Mammary epithelial cell (primary cell): ENCODE measurements at regions of chr1 and their contacts with region 1.

Region 1: DNA sequence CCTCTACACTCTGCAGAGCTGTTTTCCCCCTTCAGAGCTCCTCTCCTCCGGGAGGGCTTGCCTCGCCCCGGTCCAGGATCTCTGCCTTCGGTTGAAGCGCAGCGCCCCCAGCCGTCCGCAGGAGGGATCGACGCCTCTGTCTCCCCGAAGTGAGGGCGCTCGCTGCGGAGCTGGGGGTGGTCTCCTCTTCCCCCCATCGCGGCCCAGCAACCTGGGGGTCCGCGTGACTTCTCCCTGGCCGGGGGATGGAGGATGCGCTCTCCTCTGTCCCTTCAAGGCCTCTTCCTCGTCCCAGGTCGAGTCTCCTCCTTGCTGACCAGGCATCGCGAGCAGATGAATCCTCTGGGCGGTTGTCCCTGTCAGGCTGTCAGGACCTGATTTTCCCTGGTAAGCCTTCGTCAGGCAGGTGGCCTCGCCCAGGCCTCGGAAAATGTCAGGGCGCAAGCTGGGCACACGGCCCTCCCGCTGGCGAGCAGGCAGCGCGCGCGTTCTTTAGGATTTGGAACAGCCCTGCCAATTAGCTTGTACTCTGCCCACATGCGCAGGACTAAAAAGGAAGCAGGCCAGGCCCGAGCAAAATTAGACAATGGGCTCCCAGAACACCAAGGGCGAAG is 90.5 kb downstream of the EDEM3 start:
- DNase-seq: peak; percentile 43
- H3K4me3 ChIP-seq: peak overlapping the region; percentile 40 to 51 (median 48)
- H3K27ac ChIP-seq: no peak overlapping the region
- H3K4me1 ChIP-seq: peaks cover 10% of the 10 kb centered on the region
- H3K27me3 ChIP-seq: no peaks in the 10 kb centered on the region
- CTCF ChIP-seq: peak; percentile 77 to 97

Region 2: DNA sequence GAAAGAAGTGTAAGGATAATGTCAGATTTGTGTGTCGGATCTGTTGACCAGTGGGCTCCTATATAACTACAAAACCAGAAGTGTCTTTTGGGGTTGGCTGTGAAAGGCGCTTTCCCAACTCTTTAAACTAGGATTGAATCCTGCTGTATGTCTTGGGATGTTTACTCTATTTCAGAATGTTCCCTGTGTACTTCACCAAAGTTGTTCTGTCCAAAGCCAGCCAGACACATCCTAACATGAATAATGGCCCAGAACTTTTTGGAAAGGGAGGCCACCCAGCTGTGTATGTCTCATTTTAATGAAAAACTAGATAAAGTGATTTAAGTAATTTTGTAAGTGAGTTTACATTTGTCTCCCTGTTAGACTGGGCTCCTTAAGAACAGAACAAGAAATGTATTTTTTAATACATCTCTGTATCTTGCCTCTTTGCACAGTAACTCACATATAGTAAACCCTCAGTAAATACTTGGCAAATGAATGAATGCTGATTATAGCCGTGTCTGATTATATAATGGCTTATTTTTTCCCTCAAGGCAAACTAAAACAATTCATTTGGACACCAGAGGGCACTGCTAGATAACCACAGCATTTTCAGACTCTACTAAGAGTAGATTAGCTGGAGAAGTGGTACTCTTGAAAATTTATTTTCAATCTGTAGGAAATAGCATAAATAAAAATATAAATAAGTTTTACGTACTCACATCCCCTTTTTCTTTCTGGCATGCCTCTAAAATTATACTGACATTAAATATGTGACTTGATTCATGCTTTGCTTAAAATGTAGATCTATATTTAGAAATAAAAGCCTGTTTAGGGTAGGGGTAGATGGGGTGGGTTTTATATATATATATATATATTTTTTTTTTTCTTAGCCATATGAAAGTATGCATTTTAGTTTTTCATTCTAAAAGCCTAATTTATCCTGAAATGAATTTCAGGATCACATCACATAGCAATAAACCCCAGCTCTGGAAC is 588.8 kb before region 1 on chr1:
- CTCF ChIA-PET with region 1: no interaction called
- dilution Hi-C with region 1: no loop called
- in situ Hi-C with region 1: loop called (anchors 10 to 25 kb)
- intact Hi-C with region 1: loop called (anchors 1 kb)
- DNase-seq: peak; percentile 51
- H3K4me3 ChIP-seq: no peak overlapping the region
- H3K27ac ChIP-seq: no peak overlapping the region
- H3K4me1 ChIP-seq: no peaks in the 10 kb centered on the region
- H3K27me3 ChIP-seq: no peaks in the 10 kb centered on the region
- CTCF ChIP-seq: peak; percentile 70 to 72

Region 3: GRCh38 chr1:184222652-184223052 is 441.5 kb before region 1 on chr1:
- CTCF ChIA-PET with region 1: no interaction called
- dilution Hi-C with region 1: no loop called
- in situ Hi-C with region 1: loop called (anchors 10 to 25 kb)
- intact Hi-C with region 1: loop called (anchors 1 kb)
- DNase-seq: peak; percentile 48
- H3K4me3 ChIP-seq: no peak overlapping the region
- H3K27ac ChIP-seq: no peak overlapping the region
- H3K4me1 ChIP-seq: no peaks in the 10 kb centered on the region
- H3K27me3 ChIP-seq: no peaks in the 10 kb centered on the region
- CTCF ChIP-seq: peak; percentile 91 to 94

Region 4: DNA sequence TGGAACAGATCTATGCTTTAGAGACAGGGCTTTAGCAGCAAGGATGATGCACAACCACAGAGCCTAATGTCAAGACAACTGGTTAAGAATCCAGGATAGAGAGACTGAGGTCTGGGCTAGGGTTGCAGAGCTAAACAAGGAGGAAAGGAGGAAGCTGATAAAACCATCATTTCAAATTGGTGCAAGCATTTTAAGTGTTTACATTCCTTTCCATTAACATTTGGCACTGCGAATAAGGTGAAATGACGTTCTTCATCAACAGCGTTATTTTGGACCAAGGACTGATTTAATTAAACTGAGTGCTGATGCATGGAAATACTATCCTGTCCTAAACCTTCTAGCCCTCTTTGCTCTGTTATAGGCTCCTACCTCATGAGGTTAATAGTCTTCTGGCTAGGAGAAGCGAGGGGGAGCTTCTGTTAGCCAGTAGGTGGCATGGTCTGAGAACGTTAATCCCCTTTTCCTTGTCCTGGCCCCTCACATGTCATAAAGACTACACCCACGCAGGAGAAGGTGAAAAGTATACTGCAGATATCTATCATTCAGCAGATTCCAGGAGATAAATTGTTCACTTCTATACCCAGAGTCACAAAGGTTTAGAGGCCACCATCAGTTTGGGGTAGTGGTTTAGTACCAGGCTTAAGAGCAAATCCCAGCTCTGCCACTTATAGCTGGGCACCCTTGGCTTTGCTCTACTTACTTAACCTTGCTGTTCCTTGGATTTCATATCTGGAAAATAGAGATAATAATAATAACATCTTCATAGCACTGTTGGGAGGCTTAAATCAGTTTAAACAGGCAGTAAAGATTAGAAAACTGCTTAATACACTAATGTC is 284.8 kb before region 1 on chr1:
- CTCF ChIA-PET with region 1: interaction called, 4 read pairs
- dilution Hi-C with region 1: no loop called
- in situ Hi-C with region 1: no loop called
- intact Hi-C with region 1: loop called (anchors 1 kb)
- DNase-seq: no peak
- H3K4me3 ChIP-seq: no peak overlapping the region
- H3K27ac ChIP-seq: no peak overlapping the region
- H3K4me1 ChIP-seq: no peaks in the 10 kb centered on the region
- H3K27me3 ChIP-seq: no peaks in the 10 kb centered on the region
- CTCF ChIP-seq: peak; percentile 13 to 17

Region 5: DNA sequence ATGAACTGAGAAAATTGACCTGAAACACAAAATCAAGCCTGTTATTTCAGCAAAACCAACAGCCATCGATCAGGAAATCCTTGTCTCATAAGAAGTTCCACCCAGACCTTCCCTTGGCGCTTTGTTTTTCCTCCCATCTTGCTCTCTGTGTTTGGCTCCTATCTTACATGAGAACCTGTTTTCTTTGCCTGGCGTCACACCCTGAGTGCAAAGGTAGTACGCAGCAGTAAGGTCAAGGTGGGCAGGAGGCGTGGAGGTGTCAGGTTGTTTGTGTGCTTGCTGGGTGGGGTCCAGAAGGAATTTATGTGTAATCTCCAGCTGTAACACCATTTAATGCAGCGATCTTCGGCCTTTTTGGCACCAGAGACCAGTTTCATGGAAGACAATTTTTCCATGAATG is 226.9 kb before region 1 on chr1:
- CTCF ChIA-PET with region 1: no interaction called
- dilution Hi-C with region 1: no loop called
- in situ Hi-C with region 1: no loop called
- intact Hi-C with region 1: no loop called
- DNase-seq: no peak
- H3K4me3 ChIP-seq: no peak overlapping the region
- H3K27ac ChIP-seq: no peak overlapping the region
- H3K4me1 ChIP-seq: no peaks in the 10 kb centered on the region
- H3K27me3 ChIP-seq: no peaks in the 10 kb centered on the region
- CTCF ChIP-seq: no peak

Region 6: DNA sequence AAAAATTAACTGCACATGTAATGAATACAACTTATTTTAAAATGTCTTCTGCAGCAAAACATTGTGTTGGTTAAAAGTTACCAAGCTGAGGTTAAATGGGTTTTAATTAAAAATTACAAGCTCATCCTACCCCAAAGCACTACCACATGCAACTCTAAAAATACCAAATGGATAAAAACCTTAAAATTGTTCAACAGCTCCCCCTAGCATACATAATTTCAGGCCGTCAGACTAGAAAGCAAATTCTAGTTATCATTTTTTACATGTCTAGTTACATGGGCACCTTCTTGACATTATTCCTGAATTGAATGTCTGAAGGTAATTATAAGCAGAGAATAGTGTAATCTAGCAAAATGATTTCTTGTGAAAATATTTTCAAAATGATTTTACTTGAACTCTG is 100.8 kb before region 1 on chr1:
- CTCF ChIA-PET with region 1: interaction called, 3 read pairs
- dilution Hi-C with region 1: no loop called
- in situ Hi-C with region 1: no loop called
- intact Hi-C with region 1: loop called (anchors 2 kb)
- DNase-seq: peak; percentile 16
- H3K4me3 ChIP-seq: no peak overlapping the region
- H3K27ac ChIP-seq: no peak overlapping the region
- H3K4me1 ChIP-seq: peaks cover 14% of the 10 kb centered on the region
- H3K27me3 ChIP-seq: no peaks in the 10 kb centered on the region
- CTCF ChIP-seq: peak; percentile 46 to 60